Right lobe of liver (tissue), 6 donors: ENCODE measurements at regions of chr5 and their contacts with region 1.

Region 1: GRCh38 chr5:64612344-64612961 is 77.8 kb upstream of the SHISAL2B start:
- DNase-seq: no peak
- ATAC-seq: peak; percentile 83 to 93 (median 88)
- H3K4me3 ChIP-seq: no peak overlapping the region
- H3K27ac ChIP-seq: no peak overlapping the region
- H3K4me1 ChIP-seq: peaks cover 0 to 3% (median 0%) of the 10 kb centered on the region in 4 donors
- H3K27me3 ChIP-seq: no peaks in the 10 kb centered on the region
- CTCF ChIP-seq: peak; percentile 69 to 82 (median 78)
- POLR2A ChIP-seq: no peak

Region 2: GRCh38 chr5:64229163-64229774 is 383.2 kb before region 1 on chr5:
- intact Hi-C with region 1: loop called in 1 of 2 experiments (anchors 10 kb)
- DNase-seq: no peak
- ATAC-seq: peak; percentile 59 to 71 (median 67)
- H3K4me3 ChIP-seq: no peak overlapping the region
- H3K27ac ChIP-seq: no peak overlapping the region
- H3K4me1 ChIP-seq: no peaks in the 10 kb centered on the region
- H3K27me3 ChIP-seq: no peaks in the 10 kb centered on the region
- CTCF ChIP-seq: peak; percentile 56 to 69 (median 62)
- POLR2A ChIP-seq: no peak

Region 3: GRCh38 chr5:64384761-64385160 is 227.7 kb before region 1 on chr5:
- intact Hi-C with region 1: no loop called
- DNase-seq: no peak
- ATAC-seq: peak in 3 of 4 donors; percentile 23 to 57 (median 44)
- H3K4me3 ChIP-seq: no peak overlapping the region
- H3K27ac ChIP-seq: no peak overlapping the region
- H3K4me1 ChIP-seq: no peaks in the 10 kb centered on the region
- H3K27me3 ChIP-seq: no peaks in the 10 kb centered on the region
- CTCF ChIP-seq: peak in 3 of 4 donors; percentile 10 to 26 (median 20)
- POLR2A ChIP-seq: no peak